Naive thymus-derived CD4-positive, alpha-beta T cell (primary cell): ENCODE measurements at regions of chr11 and their contacts with region 1.

Region 1: DNA sequence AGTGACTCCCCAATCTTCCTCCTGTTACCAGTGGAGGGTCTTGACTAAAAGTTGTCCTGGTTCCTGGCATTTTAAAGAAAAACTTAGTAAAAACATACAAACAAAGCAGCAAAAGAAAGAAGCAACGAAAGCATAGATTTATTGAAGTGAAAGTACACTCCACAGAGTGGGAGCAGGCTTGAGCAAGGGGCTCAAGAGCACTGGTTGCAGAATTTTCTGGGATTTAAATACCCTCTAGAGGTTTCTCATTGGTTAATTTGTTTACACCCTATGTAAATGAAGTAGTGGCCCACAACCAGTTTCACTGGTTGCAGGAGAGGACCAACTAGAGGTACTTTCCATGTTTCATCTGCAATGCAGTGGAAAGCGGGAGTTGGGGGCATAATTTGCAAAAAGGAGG is 10.7 kb downstream of the FAM111B start:
- DNase-seq: no peak
- ATAC-seq: no peak
- H3K4me3 ChIP-seq: no peak overlapping the region
- H3K4me3 Mint-ChIP-seq: no peak overlapping the region
- H3K27ac ChIP-seq: no peak overlapping the region
- H3K27ac Mint-ChIP-seq: no peak overlapping the region
- H3K4me1 ChIP-seq: no peaks in the 10 kb centered on the region
- H3K4me1 Mint-ChIP-seq: peaks cover 0 to 25% (median 0%) of the 10 kb centered on the region in 7 donors
- H3K27me3 ChIP-seq: no peaks in the 10 kb centered on the region
- H3K27me3 Mint-ChIP-seq: peaks cover 0 to 3% (median 0%) of the 10 kb centered on the region in 5 donors

Region 2: GRCh38 chr11:59040607-59041006 is 77.2 kb before region 1 on chr11:
- CTCF ChIA-PET with region 1: no interaction called
- POLR2A ChIA-PET with region 1: no interaction called
- intact Hi-C with region 1: no loop called
- DNase-seq: no peak
- ATAC-seq: no peak
- H3K4me3 ChIP-seq: no peak overlapping the region
- H3K4me3 Mint-ChIP-seq: no peak overlapping the region
- H3K27ac ChIP-seq: no peak overlapping the region
- H3K27ac Mint-ChIP-seq: no peak overlapping the region
- H3K4me1 ChIP-seq: no peaks in the 10 kb centered on the region
- H3K4me1 Mint-ChIP-seq: no peaks in the 10 kb centered on the region
- H3K27me3 ChIP-seq: no peaks in the 10 kb centered on the region
- H3K27me3 Mint-ChIP-seq: peaks cover under 1 to 13% (median 9%) of the 10 kb centered on the region in 5 donors

Region 3: GRCh38 chr11:59106363-59107336 is 11.1 kb before region 1 on chr11 and contains the start of gene FAM111B:
- CTCF ChIA-PET with region 1: interaction called, 4 read pairs
- POLR2A ChIA-PET with region 1: no interaction called
- intact Hi-C with region 1: loop called in 1 of 2 experiments (anchors 2 kb)
- DNase-seq: peak; percentile 10 to 76 (median 39)
- ATAC-seq: peak; percentile 85
- H3K4me3 ChIP-seq: peak within 1 kb of the TSS; percentile 65
- H3K4me3 Mint-ChIP-seq: peak within 1 kb of the TSS; percentile 71 to 92 (median 83)
- H3K27ac ChIP-seq: no peak within 1 kb of the TSS
- H3K27ac Mint-ChIP-seq: peak within 1 kb of the TSS in 3 of 9 donors; percentile 13 to 83 (median 49)
- H3K4me1 ChIP-seq: peaks cover 12% of the 10 kb centered on the region in 2 donors
- H3K4me1 Mint-ChIP-seq: peaks cover 13 to 79% (median 26%) of the 10 kb centered on the region in 7 donors
- H3K27me3 ChIP-seq: peaks cover 0 to 5% of the 10 kb centered on the region in 2 donors
- H3K27me3 Mint-ChIP-seq: peaks cover 0 to 38% (median 34%) of the 10 kb centered on the region in 5 donors
- total RNA-seq, gene FAM111B: 0.11 to 79.8 (median 0.42) TPM in 4 of 5 experiments, not detected in the other